ENCODE measurements at regions of chr10 and their contacts with region 1.

Region 1: DNA sequence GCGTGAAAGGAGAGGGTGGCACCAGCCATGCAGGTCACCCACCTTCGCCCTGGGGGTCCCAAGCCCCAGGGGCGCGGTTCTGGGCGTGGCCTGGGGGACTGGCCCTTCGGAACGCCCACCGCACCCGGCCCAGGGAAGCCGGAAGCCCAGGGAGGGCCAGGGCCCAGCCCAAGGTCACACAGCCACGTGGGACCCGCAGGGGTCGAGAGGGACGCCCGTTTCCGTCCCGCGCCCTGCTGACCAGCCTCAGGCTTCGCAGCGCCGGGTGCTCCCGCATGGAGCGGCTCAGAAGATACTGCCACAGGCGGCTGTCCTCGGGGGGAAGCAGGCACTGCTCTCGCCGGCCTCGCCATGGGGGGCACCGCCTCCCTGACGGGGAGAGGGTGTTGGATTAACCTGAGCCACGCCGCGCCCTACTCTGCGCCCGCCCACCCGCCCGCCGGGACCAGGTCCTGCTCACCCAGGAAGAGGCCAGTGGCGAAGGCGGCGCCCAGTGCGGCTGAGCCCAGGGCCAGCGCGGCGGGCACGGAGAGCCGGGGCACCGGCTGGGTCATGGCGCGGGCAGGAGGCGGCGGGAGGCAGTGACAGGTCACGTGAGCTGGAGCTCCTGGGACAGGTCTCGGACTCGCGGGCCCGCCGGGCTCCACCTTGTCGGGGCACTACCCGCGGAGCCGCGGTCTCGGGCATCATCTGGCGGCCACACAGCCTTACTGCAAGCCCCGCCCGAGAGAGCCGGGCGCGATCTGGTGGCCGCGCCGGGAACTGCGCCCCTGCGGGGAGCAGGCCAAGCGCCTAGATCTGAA is at the start of gene COMTD1:
- DNase-seq: peak; percentile 90 to 96 (median 92)
- ATAC-seq: peak; percentile 66
- H3K4me3 ChIP-seq: peak within 1 kb of the TSS; percentile 68 to 73
- H3K4me3 Mint-ChIP-seq: peak within 1 kb of the TSS; percentile 82
- H3K27ac ChIP-seq: peak within 1 kb of the TSS; percentile 52 to 66
- H3K27ac Mint-ChIP-seq: peak within 1 kb of the TSS; percentile 80
- H3K4me1 ChIP-seq: peaks cover 14% of the 10 kb centered on the region
- H3K4me1 Mint-ChIP-seq: peaks cover 20% of the 10 kb centered on the region
- H3K27me3 ChIP-seq: no peaks in the 10 kb centered on the region
- H3K27me3 Mint-ChIP-seq: no peaks in the 10 kb centered on the region
- CTCF ChIP-seq: peak; percentile 100
- total RNA-seq, gene COMTD1: 7.6 to 7.9 TPM

Region 2: DNA sequence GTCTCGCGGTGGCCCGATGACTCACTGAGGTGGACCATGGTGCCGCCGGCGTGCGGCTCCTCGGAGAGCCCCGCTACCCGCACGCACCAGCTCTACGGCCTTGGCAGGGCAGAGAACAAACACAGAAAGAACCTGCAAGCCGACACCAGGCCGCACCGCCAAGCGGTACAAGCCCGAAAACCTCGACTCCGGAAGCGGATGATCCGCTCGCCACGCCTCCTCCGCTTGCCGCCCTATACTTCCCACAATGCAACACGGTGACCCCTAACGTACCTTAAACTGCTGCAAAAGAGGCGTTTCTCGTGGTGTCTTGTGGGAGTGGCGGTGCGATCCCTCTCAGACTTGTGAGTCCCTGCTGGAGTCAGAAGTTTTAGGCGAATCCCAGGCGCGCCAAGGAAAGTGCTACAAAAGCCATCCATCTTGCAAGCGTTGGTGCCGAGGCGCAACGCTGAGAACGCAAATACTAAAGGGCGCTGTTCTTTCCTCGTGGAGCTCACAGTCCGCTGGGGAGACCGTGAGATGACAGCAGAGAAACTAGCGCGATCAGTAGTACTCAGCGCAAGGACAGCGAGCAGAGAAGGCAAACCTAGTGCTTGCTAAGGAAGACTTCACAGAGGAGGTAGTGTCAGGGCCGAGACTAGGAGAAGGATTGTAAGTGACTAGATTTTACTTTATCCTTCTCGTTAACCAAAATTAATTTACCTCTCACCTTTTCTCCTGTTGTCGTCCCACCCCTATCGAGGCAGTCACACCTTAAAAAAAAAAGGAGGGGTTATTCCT is 1982.9 kb before region 1 on chr10 and contains the start of gene MRPS16:
- CTCF ChIA-PET with region 1: no interaction called
- POLR2A ChIA-PET with region 1: no interaction called
- intact Hi-C with region 1: loop called (anchors 5 to 10 kb)
- DNase-seq: peak; percentile 86 to 97 (median 93)
- ATAC-seq: peak; percentile 90
- H3K4me3 ChIP-seq: peak within 1 kb of the TSS; percentile 87 to 96
- H3K4me3 Mint-ChIP-seq: peak within 1 kb of the TSS; percentile 99
- H3K27ac ChIP-seq: peak within 1 kb of the TSS; percentile 80 to 94
- H3K27ac Mint-ChIP-seq: peak within 1 kb of the TSS; percentile 96
- H3K4me1 ChIP-seq: peaks cover 19% of the 10 kb centered on the region
- H3K4me1 Mint-ChIP-seq: peaks cover 46% of the 10 kb centered on the region
- H3K27me3 ChIP-seq: no peaks in the 10 kb centered on the region
- H3K27me3 Mint-ChIP-seq: no peaks in the 10 kb centered on the region
- CTCF ChIP-seq: no peak
- total RNA-seq, gene MRPS16: 23.6 to 28.7 TPM

Region 3: GRCh38 chr10:74151056-74151878 is 1084.3 kb before region 1 on chr10 and contains the start of gene ADK:
- CTCF ChIA-PET with region 1: interaction called, 3 read pairs
- POLR2A ChIA-PET with region 1: no interaction called
- intact Hi-C with region 1: loop called in 1 of 2 experiments (anchors 10 kb)
- DNase-seq: peak; percentile 99 to 100 (median 100)
- ATAC-seq: peak; percentile 96
- H3K4me3 ChIP-seq: peak within 1 kb of the TSS; percentile 70 to 78
- H3K4me3 Mint-ChIP-seq: no peak within 1 kb of the TSS
- H3K27ac ChIP-seq: peak within 1 kb of the TSS; percentile 86 to 99
- H3K27ac Mint-ChIP-seq: no peak within 1 kb of the TSS
- H3K4me1 ChIP-seq: peaks cover 30% of the 10 kb centered on the region
- H3K4me1 Mint-ChIP-seq: peaks cover 42% of the 10 kb centered on the region
- H3K27me3 ChIP-seq: no peaks in the 10 kb centered on the region
- H3K27me3 Mint-ChIP-seq: no peaks in the 10 kb centered on the region
- CTCF ChIP-seq: peak; percentile 22
- total RNA-seq, gene ADK: 20.7 to 21.8 TPM

Region 4: GRCh38 chr10:74419958-74420375 is 815.6 kb before region 1 on chr10:
- CTCF ChIA-PET with region 1: no interaction called
- POLR2A ChIA-PET with region 1: no interaction called
- intact Hi-C with region 1: loop called in 1 of 2 experiments (anchors 5 kb)
- DNase-seq: peak in 7 of 9 experiments; percentile 1 to 54 (median 36)
- ATAC-seq: peak; percentile 58
- H3K4me3 ChIP-seq: no peak overlapping the region
- H3K4me3 Mint-ChIP-seq: no peak overlapping the region
- H3K27ac ChIP-seq: no peak overlapping the region
- H3K27ac Mint-ChIP-seq: no peak overlapping the region
- H3K4me1 ChIP-seq: no peaks in the 10 kb centered on the region
- H3K4me1 Mint-ChIP-seq: peaks cover 5% of the 10 kb centered on the region
- H3K27me3 ChIP-seq: no peaks in the 10 kb centered on the region
- H3K27me3 Mint-ChIP-seq: no peaks in the 10 kb centered on the region
- CTCF ChIP-seq: peak; percentile 55

Region 5: DNA sequence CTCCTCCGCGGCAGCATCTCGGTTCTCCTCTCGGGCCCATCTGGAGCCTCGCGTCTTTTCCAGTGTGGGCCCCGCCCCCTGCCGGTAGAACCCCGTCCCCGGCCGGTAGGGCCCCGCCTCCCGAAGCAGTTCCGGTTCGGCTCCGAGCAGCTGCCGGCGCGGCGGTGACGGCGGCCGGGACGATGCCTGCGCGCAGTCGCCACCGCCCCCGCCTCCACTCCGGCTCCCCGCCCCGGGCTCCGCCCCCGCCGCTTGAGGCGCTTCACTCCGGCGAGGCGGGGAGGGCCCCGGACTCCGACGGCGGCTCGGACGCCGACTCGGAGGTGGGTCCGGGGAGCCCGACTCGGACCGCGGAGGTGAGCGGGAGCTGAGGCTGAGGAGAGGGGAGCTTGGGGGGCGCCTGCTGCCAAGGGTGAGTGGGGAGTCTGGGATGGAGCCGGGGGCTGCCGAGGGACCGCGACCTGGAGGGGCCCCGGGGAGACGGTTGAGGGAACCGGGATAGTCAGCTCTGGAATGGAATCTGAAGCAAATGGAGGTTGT is 124.1 kb before region 1 on chr10 and contains the start of gene SAMD8:
- CTCF ChIA-PET with region 1: interaction called, 4 read pairs
- POLR2A ChIA-PET with region 1: interaction called, 3 read pairs
- intact Hi-C with region 1: loop called (anchors 1 kb)
- DNase-seq: peak; percentile 83 to 98 (median 94)
- ATAC-seq: peak; percentile 77
- H3K4me3 ChIP-seq: peak within 1 kb of the TSS; percentile 68 to 99
- H3K4me3 Mint-ChIP-seq: peak within 1 kb of the TSS; percentile 83
- H3K27ac ChIP-seq: peak within 1 kb of the TSS; percentile 77 to 97
- H3K27ac Mint-ChIP-seq: peak within 1 kb of the TSS; percentile 97
- H3K4me1 ChIP-seq: peaks cover 20% of the 10 kb centered on the region
- H3K4me1 Mint-ChIP-seq: peaks cover 56% of the 10 kb centered on the region
- H3K27me3 ChIP-seq: no peaks in the 10 kb centered on the region
- H3K27me3 Mint-ChIP-seq: no peaks in the 10 kb centered on the region
- CTCF ChIP-seq: no peak
- total RNA-seq, gene SAMD8: 41.2 to 41.4 TPM

Region 6: DNA sequence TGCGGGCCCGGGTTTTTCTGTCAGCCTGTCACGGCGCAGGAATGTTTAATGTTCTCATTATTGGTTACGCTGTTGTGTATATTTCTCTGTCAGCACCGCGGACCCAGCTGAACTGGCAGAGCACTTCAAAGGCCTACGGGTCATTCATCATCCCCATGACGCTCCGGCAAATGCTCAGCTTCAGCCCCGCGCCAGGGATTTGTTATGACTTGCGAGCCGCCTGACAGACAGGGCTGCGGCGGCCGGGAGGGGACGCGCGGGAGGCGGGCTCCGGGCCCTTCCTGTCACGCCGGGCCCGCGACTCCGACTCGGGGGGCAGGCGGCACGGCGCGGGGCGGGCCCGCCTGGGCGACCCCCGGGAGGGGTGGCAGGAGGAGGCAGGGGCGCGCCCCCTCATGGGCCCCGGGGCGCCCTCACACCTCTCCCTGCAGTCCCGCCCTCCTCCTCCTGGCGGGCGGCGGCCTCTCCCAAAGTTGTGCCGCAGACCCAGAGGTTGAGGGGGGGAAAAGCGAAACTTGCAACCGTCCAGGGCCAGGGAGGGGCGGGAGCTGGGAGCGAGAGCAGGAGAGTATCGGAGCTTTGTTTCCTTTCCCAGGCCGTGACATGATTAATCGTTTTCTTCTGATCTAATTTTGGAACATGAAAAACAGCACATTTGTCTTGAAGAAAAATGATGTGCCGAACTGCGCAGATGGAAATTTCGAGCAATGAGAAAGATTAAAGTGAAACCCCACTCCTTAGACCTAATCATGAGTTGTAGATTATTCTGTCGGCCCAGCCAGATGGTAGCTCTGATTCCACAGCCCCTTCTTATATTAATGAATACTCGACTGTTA is 59.5 kb after region 1 on chr10:
- CTCF ChIA-PET with region 1: no interaction called
- POLR2A ChIA-PET with region 1: no interaction called
- intact Hi-C with region 1: loop called in 1 of 2 experiments (anchors 1 kb)
- DNase-seq: peak; percentile 14 to 82 (median 72)
- ATAC-seq: peak; percentile 84
- H3K4me3 ChIP-seq: peak overlapping the region; percentile 58 to 76
- H3K4me3 Mint-ChIP-seq: peak overlapping the region; percentile 84
- H3K27ac ChIP-seq: peak overlapping the region; percentile 22 to 46
- H3K27ac Mint-ChIP-seq: peak overlapping the region; percentile 78
- H3K4me1 ChIP-seq: peaks cover 12% of the 10 kb centered on the region
- H3K4me1 Mint-ChIP-seq: peaks cover 5% of the 10 kb centered on the region
- H3K27me3 ChIP-seq: peaks cover 0 to 4% of the 10 kb centered on the region in 2 experiments
- H3K27me3 Mint-ChIP-seq: peaks cover 7% of the 10 kb centered on the region
- CTCF ChIP-seq: peak; percentile 37

Region 7: GRCh38 chr10:75592791-75593643 is 357.4 kb after region 1 on chr10:
- CTCF ChIA-PET with region 1: no interaction called
- POLR2A ChIA-PET with region 1: no interaction called
- intact Hi-C with region 1: no loop called
- DNase-seq: no peak
- ATAC-seq: no peak
- H3K4me3 ChIP-seq: no peak overlapping the region
- H3K4me3 Mint-ChIP-seq: no peak overlapping the region
- H3K27ac ChIP-seq: no peak overlapping the region
- H3K27ac Mint-ChIP-seq: no peak overlapping the region
- H3K4me1 ChIP-seq: no peaks in the 10 kb centered on the region
- H3K4me1 Mint-ChIP-seq: no peaks in the 10 kb centered on the region
- H3K27me3 ChIP-seq: no peaks in the 10 kb centered on the region
- H3K27me3 Mint-ChIP-seq: peaks cover 15% of the 10 kb centered on the region
- CTCF ChIP-seq: no peak